IMR-90 (cell line): ENCODE measurements at regions of chr4 and their contacts with region 1.

Region 1: GRCh38 chr4:48924416-48924815 is 17.8 kb upstream of the OCIAD2 start:
- DNase-seq: no peak
- ATAC-seq: no peak
- H3K4me3 ChIP-seq: no peak overlapping the region
- H3K27ac ChIP-seq: no peak overlapping the region
- H3K4me1 ChIP-seq: no peaks in the 10 kb centered on the region
- H3K27me3 ChIP-seq: no peaks in the 10 kb centered on the region
- CTCF ChIP-seq: no peak
- POLR2A ChIP-seq: no peak
- RAD21 ChIP-seq: no peak

Region 2: GRCh38 chr4:48180234-48180633 is 744.2 kb before region 1 on chr4:
- CTCF ChIA-PET with region 1: no interaction called
- POLR2A ChIA-PET with region 1: no interaction called
- dilution Hi-C with region 1: no loop called
- in situ Hi-C with region 1: no loop called
- intact Hi-C with region 1: loop called (anchors 5 kb)
- DNase-seq: peak; percentile 4
- ATAC-seq: no peak
- H3K4me3 ChIP-seq: no peak overlapping the region
- H3K27ac ChIP-seq: no peak overlapping the region
- H3K4me1 ChIP-seq: no peaks in the 10 kb centered on the region
- H3K27me3 ChIP-seq: no peaks in the 10 kb centered on the region
- CTCF ChIP-seq: no peak
- POLR2A ChIP-seq: no peak
- RAD21 ChIP-seq: no peak

Region 3: DNA sequence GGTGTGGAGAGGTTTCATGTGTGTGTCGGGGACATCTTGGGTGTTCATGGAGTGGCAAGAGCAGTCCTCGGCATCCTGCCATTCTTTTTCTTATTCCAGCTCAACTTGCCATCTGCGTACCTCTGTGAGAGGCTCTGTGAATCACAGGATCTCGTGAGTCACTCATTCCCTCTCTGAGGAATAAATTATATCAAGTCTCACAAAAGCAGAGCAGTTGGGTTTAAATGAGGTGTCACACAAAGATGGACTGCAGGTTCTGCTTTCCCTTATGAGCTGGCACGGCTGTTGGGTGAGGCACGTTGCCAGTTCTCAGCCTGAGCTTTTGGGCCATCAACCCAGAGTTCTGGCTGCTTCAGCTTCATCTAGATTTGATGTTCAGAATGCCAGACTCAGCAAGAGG is 11.1 kb before region 1 on chr4:
- CTCF ChIA-PET with region 1: no interaction called
- POLR2A ChIA-PET with region 1: no interaction called
- dilution Hi-C with region 1: no loop called
- in situ Hi-C with region 1: no loop called
- intact Hi-C with region 1: no loop called
- DNase-seq: peak; percentile 92
- ATAC-seq: peak; percentile 30
- H3K4me3 ChIP-seq: no peak overlapping the region
- H3K27ac ChIP-seq: no peak overlapping the region
- H3K4me1 ChIP-seq: peaks cover 2% of the 10 kb centered on the region; the same call in 1 of the 2 replicates
- H3K27me3 ChIP-seq: no peaks in the 10 kb centered on the region
- CTCF ChIP-seq: no peak
- POLR2A ChIP-seq: no peak
- RAD21 ChIP-seq: no peak